Transverse colon (tissue), 4 donors: ENCODE measurements at regions of chr12 and their contacts with region 1.

Region 1: GRCh38 chr12:119115296-119115905 is 63.3 kb upstream of the HSPB8 start:
- DNase-seq: peak; percentile 17
- H3K4me3 ChIP-seq: no peak overlapping the region
- H3K27ac ChIP-seq: no peak overlapping the region
- H3K4me1 ChIP-seq: no peaks in the 10 kb centered on the region
- H3K27me3 ChIP-seq: no peaks in the 10 kb centered on the region
- CTCF ChIP-seq: peak; percentile 72 to 88 (median 85)
- EP300 ChIP-seq: no peak
- POLR2A ChIP-seq: no peak

Region 2: DNA sequence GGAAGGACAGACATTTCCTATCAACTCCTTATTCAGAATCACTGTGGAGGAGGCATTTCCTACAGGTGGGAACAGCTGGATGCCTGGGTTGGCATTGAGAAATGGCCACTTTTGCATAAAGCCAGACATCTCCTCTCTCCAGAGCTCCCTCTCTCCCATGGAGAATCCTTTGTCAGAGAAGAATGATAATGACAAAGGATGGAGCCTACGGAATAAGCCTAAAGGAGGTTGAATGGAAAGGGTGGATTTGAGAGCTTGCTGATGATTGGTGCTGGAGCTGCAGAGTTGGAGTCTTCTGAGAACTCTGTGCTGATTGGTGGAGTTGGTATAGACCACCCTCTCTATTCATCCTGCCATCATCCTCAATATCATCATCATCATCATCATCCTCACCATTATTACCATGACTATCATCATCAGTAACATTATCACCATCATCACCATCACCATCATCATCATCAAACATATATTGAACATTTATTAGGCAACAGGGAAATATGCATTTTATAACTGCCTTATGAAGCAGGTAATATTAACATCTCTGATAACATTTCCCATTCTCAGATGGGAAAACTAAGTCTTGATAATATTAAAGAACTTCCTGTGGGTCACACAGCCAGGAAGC is 25.9 kb before region 1 on chr12:
- in situ Hi-C with region 1: no loop called
- intact Hi-C with region 1: no loop called
- DNase-seq: no peak
- H3K4me3 ChIP-seq: no peak overlapping the region
- H3K27ac ChIP-seq: no peak overlapping the region
- H3K4me1 ChIP-seq: no peaks in the 10 kb centered on the region
- H3K27me3 ChIP-seq: no peaks in the 10 kb centered on the region
- CTCF ChIP-seq: no peak
- EP300 ChIP-seq: no peak
- POLR2A ChIP-seq: no peak

Region 3: GRCh38 chr12:119412811-119413794 is 297.7 kb after region 1 on chr12:
- in situ Hi-C with region 1: loop called (anchors 10 to 25 kb)
- intact Hi-C with region 1: loop called (anchors 2 kb)
- DNase-seq: peak; percentile 67
- H3K4me3 ChIP-seq: no peak overlapping the region
- H3K27ac ChIP-seq: no peak overlapping the region
- H3K4me1 ChIP-seq: peaks cover 0 to 11% (median 2%) of the 10 kb centered on the region in 4 donors
- H3K27me3 ChIP-seq: no peaks in the 10 kb centered on the region
- CTCF ChIP-seq: peak; percentile 76 to 88 (median 82)
- EP300 ChIP-seq: no peak
- POLR2A ChIP-seq: no peak

Region 4: GRCh38 chr12:119544765-119545625 is 429.6 kb after region 1 on chr12:
- in situ Hi-C with region 1: loop called in 1 of 4 experiments (anchors 25 kb)
- intact Hi-C with region 1: loop called (anchors 10 kb)
- DNase-seq: peak; percentile 50
- H3K4me3 ChIP-seq: no peak overlapping the region
- H3K27ac ChIP-seq: no peak overlapping the region
- H3K4me1 ChIP-seq: no peaks in the 10 kb centered on the region
- H3K27me3 ChIP-seq: peaks cover 3% of the 10 kb centered on the region
- CTCF ChIP-seq: peak; percentile 72 to 83 (median 77)
- EP300 ChIP-seq: no peak
- POLR2A ChIP-seq: no peak